ENCODE measurements at regions of chr13 and their contacts with region 1.

Region 1: GRCh38 chr13:20418953-20419352 is 106.7 kb downstream of the CRYL1 start:
- DNase-seq: no peak
- H3K4me3 Mint-ChIP-seq: no peak overlapping the region
- H3K27ac Mint-ChIP-seq: peak overlapping the region; percentile 90
- H3K4me1 Mint-ChIP-seq: peaks cover 45% of the 10 kb centered on the region
- H3K27me3 Mint-ChIP-seq: no peaks in the 10 kb centered on the region

Region 2: DNA sequence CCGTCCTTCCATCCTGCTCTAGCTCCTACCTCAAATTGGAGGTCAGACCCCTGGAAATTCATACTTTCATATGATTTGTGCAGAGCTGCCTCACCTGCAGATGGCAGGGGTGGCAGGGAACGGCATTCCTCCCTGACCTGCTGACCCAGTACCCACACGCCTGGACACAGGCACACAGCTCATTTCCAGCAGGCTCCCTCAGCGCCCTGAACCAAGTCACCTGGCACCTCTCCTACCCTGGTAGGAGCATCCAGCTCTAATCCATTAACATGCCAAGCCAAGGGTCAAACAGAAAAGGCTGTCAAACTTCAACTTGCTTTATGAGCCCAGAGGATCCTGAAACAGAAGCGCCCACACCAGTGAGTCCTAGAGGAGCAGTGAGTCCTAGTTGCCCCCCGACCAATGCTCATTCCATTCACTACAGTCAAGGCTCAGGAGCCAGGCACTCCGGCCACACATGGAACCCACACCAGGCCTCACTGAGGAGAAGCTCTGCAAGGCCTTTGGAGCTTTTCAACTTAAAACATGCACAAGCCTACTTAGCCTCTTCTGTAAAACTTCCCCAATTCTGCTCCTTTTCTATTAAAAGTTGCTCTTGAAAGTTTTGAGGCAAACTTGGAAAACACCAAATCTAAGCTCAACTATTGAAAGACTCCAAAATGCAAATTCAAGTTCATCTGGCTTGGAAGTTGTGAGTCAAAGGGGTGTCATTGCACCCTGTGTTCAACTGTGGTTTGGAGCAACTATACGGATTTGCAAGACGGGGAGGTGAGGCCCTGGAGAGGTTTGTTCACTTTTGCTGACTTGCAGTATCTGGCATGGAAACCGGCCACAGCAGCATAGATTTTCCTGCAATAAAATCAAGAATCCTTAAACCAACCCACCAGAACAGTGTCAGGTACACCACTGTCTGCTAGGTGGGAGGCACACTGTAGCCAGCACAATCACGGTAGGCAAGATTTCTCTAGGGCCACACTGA is 10.0 kb after region 1 on chr13:
- intact Hi-C with region 1: loop called (anchors 1 kb)
- DNase-seq: peak; percentile 55
- H3K4me3 Mint-ChIP-seq: no peak overlapping the region
- H3K27ac Mint-ChIP-seq: peak overlapping the region; percentile 27
- H3K4me1 Mint-ChIP-seq: peaks cover 43% of the 10 kb centered on the region
- H3K27me3 Mint-ChIP-seq: peaks cover 1% of the 10 kb centered on the region

Region 3: GRCh38 chr13:20461481-20461859 is 42.5 kb after region 1 on chr13:
- intact Hi-C with region 1: loop called (anchors 1 kb)
- DNase-seq: no peak
- H3K4me3 Mint-ChIP-seq: peak overlapping the region; percentile 64
- H3K27ac Mint-ChIP-seq: peak overlapping the region; percentile 90
- H3K4me1 Mint-ChIP-seq: peaks cover 19% of the 10 kb centered on the region
- H3K27me3 Mint-ChIP-seq: peaks cover 4% of the 10 kb centered on the region

Region 4: GRCh38 chr13:20475927-20476691 is 57.2 kb after region 1 on chr13:
- intact Hi-C with region 1: loop called (anchors 1 kb)
- DNase-seq: peak; percentile 90
- H3K4me3 Mint-ChIP-seq: peak overlapping the region; percentile 74
- H3K27ac Mint-ChIP-seq: peak overlapping the region; percentile 86
- H3K4me1 Mint-ChIP-seq: peaks cover 42% of the 10 kb centered on the region
- H3K27me3 Mint-ChIP-seq: peaks cover 1% of the 10 kb centered on the region